ENCODE measurements at regions of chr14 and their contacts with region 1.

Region 1: DNA sequence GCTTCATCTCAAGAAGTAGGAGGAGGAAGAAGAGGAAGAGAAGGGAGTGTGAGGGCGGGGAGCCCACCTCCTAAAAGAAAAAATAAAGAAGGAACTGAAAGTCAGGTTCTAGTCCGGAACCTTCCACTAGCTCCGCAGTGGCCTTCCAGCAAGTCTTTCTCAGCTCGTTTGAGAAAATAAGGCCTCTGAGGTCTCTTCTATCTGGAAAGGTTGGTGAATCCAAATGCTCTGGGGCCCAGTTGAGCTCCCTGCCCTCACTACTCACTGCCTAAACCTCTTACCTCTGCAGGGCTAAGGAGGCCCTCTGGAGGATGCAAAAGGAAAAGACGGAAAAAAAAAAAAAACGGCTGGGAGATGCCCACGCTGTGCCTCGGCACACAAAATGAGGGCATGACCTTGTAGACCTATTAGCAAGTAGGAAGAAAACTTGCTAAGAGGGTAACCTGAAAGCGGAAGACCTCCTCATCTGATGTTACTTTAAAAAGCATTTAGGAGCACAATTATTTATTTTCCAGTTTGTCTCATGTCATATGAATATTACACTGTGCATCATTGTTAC is 35.9 kb downstream of the FBLN5 start:
- DNase-seq: peak; percentile 83
- H3K4me3 Mint-ChIP-seq: no peak overlapping the region
- H3K27ac Mint-ChIP-seq: peak overlapping the region; percentile 35
- H3K4me1 Mint-ChIP-seq: peaks cover 11% of the 10 kb centered on the region
- H3K27me3 Mint-ChIP-seq: peaks cover 3% of the 10 kb centered on the region

Region 2: GRCh38 chr14:91801358-91801757 is 110.2 kb before region 1 on chr14:
- intact Hi-C with region 1: loop called (anchors 5 kb)
- DNase-seq: no peak
- H3K4me3 Mint-ChIP-seq: no peak overlapping the region
- H3K27ac Mint-ChIP-seq: no peak overlapping the region
- H3K4me1 Mint-ChIP-seq: no peaks in the 10 kb centered on the region
- H3K27me3 Mint-ChIP-seq: no peaks in the 10 kb centered on the region

Region 3: DNA sequence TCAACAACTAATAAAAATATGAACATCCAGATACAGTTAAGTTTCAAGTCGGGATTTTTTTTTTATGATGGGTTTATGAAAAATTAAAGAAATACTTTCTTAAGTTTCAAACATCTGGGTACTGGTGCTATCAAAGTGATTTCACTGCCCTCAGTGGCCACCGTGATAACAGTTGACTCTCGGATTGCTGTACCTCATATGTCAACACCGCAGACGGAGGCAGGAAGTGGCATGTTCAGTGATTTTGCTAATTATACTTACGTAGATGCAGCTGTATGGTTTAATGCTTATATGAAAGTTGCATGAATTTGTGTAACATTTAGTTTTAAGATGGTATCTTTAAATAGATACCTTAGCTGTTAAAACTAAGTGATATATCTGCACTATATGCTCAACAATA is 56.7 kb after region 1 on chr14:
- intact Hi-C with region 1: no loop called
- DNase-seq: peak; percentile 64
- H3K4me3 Mint-ChIP-seq: no peak overlapping the region
- H3K27ac Mint-ChIP-seq: no peak overlapping the region
- H3K4me1 Mint-ChIP-seq: peaks cover 4% of the 10 kb centered on the region
- H3K27me3 Mint-ChIP-seq: no peaks in the 10 kb centered on the region